Ovary (tissue), 10 donors: ENCODE measurements at regions of chr19 and their contacts with region 1.

Region 1: DNA sequence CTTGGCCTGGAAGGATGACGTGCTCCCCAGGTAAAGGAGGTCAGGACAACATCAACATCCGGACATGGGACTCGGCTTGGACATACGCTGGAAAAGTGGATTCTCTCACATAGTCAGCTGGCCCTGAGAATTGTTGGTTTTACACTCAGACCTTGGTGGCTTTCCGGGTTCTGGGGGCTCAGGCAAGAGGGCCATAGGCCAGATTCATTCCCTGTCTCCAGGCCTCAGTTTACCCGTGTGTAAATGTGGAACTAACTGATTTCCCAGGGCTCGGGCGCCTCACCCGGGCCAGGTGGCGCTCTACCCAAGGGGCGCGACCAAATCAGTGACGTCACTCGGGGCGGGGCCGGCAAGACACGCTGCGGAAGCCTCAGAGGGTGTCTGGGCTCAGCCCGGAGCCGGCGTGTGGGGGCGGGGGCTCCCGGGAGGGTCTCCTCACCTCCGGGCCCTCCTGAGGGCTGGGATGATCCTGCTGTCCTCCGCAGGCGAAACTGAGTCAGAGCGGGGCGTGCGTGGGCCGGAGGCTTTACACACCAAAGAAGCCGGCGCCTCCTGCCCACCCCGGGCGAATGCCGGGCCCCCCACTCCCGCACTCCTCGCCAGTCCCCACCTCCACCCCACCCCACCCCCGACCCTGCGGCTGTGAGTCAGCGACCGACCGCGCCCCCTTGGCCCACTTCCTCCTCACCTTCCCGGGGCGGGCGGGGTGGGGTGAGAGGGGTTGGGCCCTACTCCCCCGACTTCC is 861 bp upstream of the VASP start:
- DNase-seq: peak; percentile 92 to 96 (median 94)
- H3K4me3 ChIP-seq: peak overlapping the region; percentile 94
- H3K27ac ChIP-seq: peak overlapping the region; percentile 50 to 67
- H3K4me1 ChIP-seq: peaks cover 9% of the 10 kb centered on the region
- H3K27me3 ChIP-seq: no peaks in the 10 kb centered on the region
- CTCF ChIP-seq: peak in 2 of 3 donors; percentile 43 to 53
- EP300 ChIP-seq: no peak
- POLR2A ChIP-seq: peak; percentile 72

Region 2: GRCh38 chr19:45779231-45780145 is 273.1 kb after region 1 on chr19:
- intact Hi-C with region 1: loop called in 1 of 4 experiments (anchors 5 kb)
- DNase-seq: peak; percentile 90 to 97 (median 95)
- H3K4me3 ChIP-seq: peak overlapping the region; percentile 50
- H3K27ac ChIP-seq: peak overlapping the region in 1 of 2 donors; percentile 12
- H3K4me1 ChIP-seq: peaks cover 17% of the 10 kb centered on the region
- H3K27me3 ChIP-seq: no peaks in the 10 kb centered on the region
- CTCF ChIP-seq: peak; percentile 49 to 68 (median 60)
- EP300 ChIP-seq: no peak
- POLR2A ChIP-seq: no peak